ENCODE measurements at regions of chr5 and their contacts with region 1.

Region 1: DNA sequence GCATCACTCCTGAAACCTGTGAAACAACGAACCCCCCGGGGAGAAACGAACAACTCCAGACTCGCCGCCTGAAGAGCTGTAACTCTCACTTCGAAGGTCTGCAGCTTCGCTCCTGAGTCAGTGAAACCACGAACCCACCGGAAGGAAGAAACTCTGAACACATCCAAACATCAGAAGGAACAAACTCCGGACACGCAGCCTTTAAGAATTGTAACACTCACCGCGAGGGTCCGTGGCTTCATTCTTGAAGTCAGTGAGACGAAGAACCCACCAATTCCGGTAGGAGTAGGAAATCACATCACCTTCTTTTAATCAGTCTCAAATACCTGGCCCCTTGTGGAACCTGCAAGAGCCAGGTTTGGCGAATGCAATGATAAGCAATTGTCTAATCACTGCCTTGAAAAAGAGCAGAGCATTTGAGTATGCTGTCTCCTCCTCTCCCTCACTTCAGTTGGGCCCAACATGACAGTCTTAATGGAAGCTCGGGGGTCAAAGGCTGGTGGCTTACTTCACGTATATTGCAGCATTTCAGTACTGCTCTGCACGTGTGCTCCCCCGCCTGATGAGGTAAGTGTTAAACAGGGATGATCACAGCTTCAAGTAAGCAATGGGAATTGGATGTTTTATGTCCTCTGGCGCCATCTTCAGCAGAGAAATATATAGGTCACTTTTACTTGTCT is 473 bp downstream of the IRGM start:
- DNase-seq: peak; percentile 64 to 83 (median 75)
- H3K4me3 ChIP-seq: peak overlapping the region; percentile 13 to 61 (median 31)
- H3K4me3 Mint-ChIP-seq: peak overlapping the region; percentile 77 to 93
- H3K27ac ChIP-seq: no peak overlapping the region
- H3K27ac Mint-ChIP-seq: peak overlapping the region in 6 of 7 donors; percentile 10 to 73 (median 54)
- H3K4me1 ChIP-seq: peaks cover 8 to 11% of the 10 kb centered on the region in 2 donors
- H3K4me1 Mint-ChIP-seq: peaks cover 15% of the 10 kb centered on the region
- H3K27me3 ChIP-seq: no peaks in the 10 kb centered on the region
- H3K27me3 Mint-ChIP-seq: peaks cover 0 to 6% (median 0%) of the 10 kb centered on the region in 3 donors
- CTCF ChIP-seq: peak; percentile 77

Region 2: GRCh38 chr5:150560401-150561193 is 286.2 kb before region 1 on chr5:
- intact Hi-C with region 1: loop called (anchors 2 kb)
- DNase-seq: peak; percentile 66 to 86 (median 78)
- H3K4me3 ChIP-seq: no peak overlapping the region
- H3K4me3 Mint-ChIP-seq: no peak overlapping the region
- H3K27ac ChIP-seq: no peak overlapping the region
- H3K27ac Mint-ChIP-seq: no peak overlapping the region
- H3K4me1 ChIP-seq: no peaks in the 10 kb centered on the region
- H3K4me1 Mint-ChIP-seq: no peaks in the 10 kb centered on the region
- H3K27me3 ChIP-seq: no peaks in the 10 kb centered on the region
- H3K27me3 Mint-ChIP-seq: peaks cover 0 to 5% (median 4%) of the 10 kb centered on the region in 3 donors
- CTCF ChIP-seq: peak; percentile 85

Region 3: GRCh38 chr5:150565868-150566267 is 280.9 kb before region 1 on chr5:
- intact Hi-C with region 1: loop called (anchors 2 kb)
- DNase-seq: no peak
- H3K4me3 ChIP-seq: no peak overlapping the region
- H3K4me3 Mint-ChIP-seq: no peak overlapping the region
- H3K27ac ChIP-seq: no peak overlapping the region
- H3K27ac Mint-ChIP-seq: no peak overlapping the region
- H3K4me1 ChIP-seq: peaks cover 7 to 12% of the 10 kb centered on the region in 2 donors
- H3K4me1 Mint-ChIP-seq: peaks cover 22% of the 10 kb centered on the region
- H3K27me3 ChIP-seq: no peaks in the 10 kb centered on the region
- H3K27me3 Mint-ChIP-seq: peaks cover 1 to 5% (median 4%) of the 10 kb centered on the region in 3 donors
- CTCF ChIP-seq: no peak

Region 4: DNA sequence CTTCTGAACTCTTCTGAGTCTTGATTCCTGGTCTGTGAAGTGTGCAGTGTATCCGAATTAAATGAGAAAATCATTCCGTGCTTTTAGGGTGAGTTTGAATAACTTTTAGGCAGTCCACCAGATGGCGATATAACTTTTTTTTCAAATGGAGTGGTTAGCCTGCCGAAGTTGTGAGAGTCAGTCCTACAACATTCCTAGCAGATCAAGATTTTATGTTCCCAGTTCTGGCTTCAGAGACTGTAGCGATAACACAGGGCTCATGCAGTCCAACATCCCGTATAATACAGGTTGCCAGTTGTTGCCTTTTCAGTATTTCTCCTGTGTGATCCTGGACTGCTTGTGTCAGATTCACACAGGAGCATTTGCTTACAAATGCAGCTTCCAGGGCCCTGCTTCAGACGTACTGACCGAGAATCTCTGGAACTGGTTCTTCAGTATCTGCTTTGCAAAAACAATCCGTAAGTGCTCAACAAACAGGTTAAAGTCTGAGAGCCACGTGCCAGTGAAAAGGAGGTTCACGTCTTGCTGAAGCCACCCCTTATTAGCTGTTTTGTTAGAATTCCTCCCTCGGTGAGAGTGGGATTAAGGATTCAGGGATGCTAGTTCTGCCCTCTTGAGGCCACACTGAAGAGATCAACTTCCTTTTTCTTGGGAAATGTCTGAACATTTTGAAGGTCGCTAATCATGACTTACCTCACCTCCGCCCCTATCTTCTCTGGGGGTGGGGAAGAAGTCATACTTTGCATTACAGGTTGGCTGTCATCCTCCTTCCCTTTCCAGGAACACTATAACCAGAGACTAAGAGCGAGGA is 45.5 kb before region 1 on chr5:
- intact Hi-C with region 1: loop called in 1 of 2 experiments (anchors 5 kb)
- DNase-seq: peak in 2 of 3 donors; percentile 43 to 52
- H3K4me3 ChIP-seq: peak overlapping the region; percentile 29 to 67 (median 43)
- H3K4me3 Mint-ChIP-seq: peak overlapping the region; percentile 66 to 87
- H3K27ac ChIP-seq: peak overlapping the region in 1 of 2 donors; percentile 31
- H3K27ac Mint-ChIP-seq: peak overlapping the region in 4 of 7 donors; percentile 23 to 54 (median 39)
- H3K4me1 ChIP-seq: peaks cover 8 to 11% of the 10 kb centered on the region in 2 donors
- H3K4me1 Mint-ChIP-seq: peaks cover 13% of the 10 kb centered on the region
- H3K27me3 ChIP-seq: no peaks in the 10 kb centered on the region
- H3K27me3 Mint-ChIP-seq: peaks cover 0 to 3% (median 0%) of the 10 kb centered on the region in 3 donors
- CTCF ChIP-seq: peak; percentile 74

Measured in CD14-positive monocyte (primary cell).